Dendritic cell treated with granulocyte-macrophage colony-stimulating factor and Interleukin-4, amounts not matched to agents 40 ng/mL and 50 ng/mL, for 4 days (primary cell): ENCODE measurements at regions of chr3 and their contacts with region 1.

Region 1: GRCh38 chr3:42831321-42831713 is 22.1 kb downstream of the ACKR2 start:
- H3K4me3 Mint-ChIP-seq: no peak overlapping the region
- H3K27ac Mint-ChIP-seq: no peak overlapping the region
- H3K4me1 Mint-ChIP-seq: no peaks in the 10 kb centered on the region
- H3K27me3 Mint-ChIP-seq: peaks cover 2% of the 10 kb centered on the region

Region 2: DNA sequence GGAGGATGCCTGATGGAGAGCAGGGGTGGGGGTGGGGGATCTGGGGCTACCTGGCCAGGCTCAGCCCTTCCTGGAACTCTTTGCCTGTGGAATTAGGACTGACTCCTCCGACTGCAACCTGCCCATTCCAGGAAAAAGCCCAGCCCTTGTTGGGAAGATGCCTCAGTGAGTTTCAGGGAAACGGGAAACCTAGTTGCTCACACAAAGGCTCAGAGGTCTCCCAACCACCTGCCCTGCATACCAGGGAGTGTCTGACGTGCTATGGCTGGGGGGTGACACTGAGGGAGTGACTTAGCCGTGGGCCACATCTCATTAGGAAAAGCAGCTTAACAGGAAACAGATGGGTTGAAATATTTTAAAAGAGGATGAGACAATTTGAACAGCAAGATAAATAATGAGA is 16.4 kb after region 1 on chr3:
- intact Hi-C with region 1: no loop called
- H3K4me3 Mint-ChIP-seq: no peak overlapping the region
- H3K27ac Mint-ChIP-seq: peak overlapping the region; percentile 72
- H3K4me1 Mint-ChIP-seq: peaks cover 25% of the 10 kb centered on the region
- H3K27me3 Mint-ChIP-seq: no peaks in the 10 kb centered on the region

Region 3: GRCh38 chr3:42865256-42865655 is 33.9 kb after region 1 on chr3:
- intact Hi-C with region 1: no loop called
- H3K4me3 Mint-ChIP-seq: no peak overlapping the region
- H3K27ac Mint-ChIP-seq: no peak overlapping the region
- H3K4me1 Mint-ChIP-seq: no peaks in the 10 kb centered on the region
- H3K27me3 Mint-ChIP-seq: peaks cover 10% of the 10 kb centered on the region

Region 4: GRCh38 chr3:42880601-42881451 is 49.5 kb after region 1 on chr3:
- intact Hi-C with region 1: loop called (anchors 1 kb)
- H3K4me3 Mint-ChIP-seq: peak overlapping the region; percentile 73
- H3K27ac Mint-ChIP-seq: peak overlapping the region; percentile 68
- H3K4me1 Mint-ChIP-seq: peaks cover 12% of the 10 kb centered on the region
- H3K27me3 Mint-ChIP-seq: peaks cover 19% of the 10 kb centered on the region